Calu3 (cell line): ENCODE measurements at regions of chr10 and their contacts with region 1.

Region 1: DNA sequence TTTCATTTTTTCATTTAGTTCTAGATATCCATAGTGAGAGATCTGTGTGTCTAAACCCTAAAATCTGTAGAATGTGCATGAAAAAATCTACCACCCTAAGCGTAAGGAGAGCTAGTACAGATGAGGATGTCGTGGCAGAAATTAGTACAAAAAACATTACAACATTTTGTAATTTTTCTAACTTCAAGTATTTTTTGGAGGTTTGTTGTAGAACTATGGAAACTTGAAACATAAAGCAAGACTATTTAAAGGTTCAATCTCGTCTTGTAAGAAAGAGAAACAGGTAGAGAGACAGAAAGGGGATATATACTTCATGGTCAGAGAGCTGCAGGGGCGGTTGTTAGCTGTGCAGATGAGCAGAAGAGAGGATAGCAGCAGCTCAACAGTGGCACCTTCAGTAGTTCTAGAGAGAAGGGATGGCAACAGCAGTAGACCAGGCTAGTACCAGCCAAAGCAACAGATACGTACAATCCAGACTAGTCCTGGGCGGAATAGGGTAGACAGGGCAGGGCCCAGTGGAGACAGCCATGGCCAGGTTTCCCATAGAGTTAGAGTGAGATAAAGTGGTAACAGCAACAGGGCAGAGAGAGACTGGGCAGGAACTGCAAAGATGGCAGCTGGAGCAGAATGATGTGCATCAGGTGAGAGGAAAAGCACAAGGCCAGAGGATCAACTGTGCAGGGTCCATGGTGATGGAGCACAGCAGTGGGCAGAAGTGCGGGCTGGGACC is 145.2 kb downstream of the FRMD4A start:
- DNase-seq: no peak
- H3K4me3 Mint-ChIP-seq: no peak overlapping the region
- H3K27ac Mint-ChIP-seq: no peak overlapping the region
- H3K4me1 Mint-ChIP-seq: peaks cover 5% of the 10 kb centered on the region
- H3K27me3 Mint-ChIP-seq: peaks cover 68% of the 10 kb centered on the region
- CTCF ChIP-seq: no peak

Region 2: DNA sequence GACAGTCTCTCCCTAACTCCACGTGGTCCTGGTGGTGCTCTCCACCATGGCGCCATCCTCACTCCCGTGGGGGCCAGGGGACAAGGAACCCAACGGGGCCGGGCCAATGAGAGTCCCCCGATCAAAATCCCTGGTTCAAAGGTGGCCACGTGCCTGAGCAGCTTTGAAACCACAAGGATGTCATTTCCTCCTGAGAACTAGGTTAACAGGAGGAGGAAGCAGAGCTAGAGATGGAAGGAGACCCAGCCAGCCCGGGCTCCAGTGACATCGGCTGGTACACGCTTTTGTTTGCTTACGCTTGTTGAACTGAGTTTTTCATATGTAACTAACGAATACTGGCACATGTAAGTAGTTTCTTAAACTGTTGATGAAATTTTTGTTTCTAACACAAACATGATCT is 537.1 kb before region 1 on chr10:
- CTCF ChIA-PET with region 1: no interaction called
- intact Hi-C with region 1: no loop called
- DNase-seq: no peak
- H3K4me3 Mint-ChIP-seq: no peak overlapping the region
- H3K27ac Mint-ChIP-seq: no peak overlapping the region
- H3K4me1 Mint-ChIP-seq: no peaks in the 10 kb centered on the region
- H3K27me3 Mint-ChIP-seq: no peaks in the 10 kb centered on the region
- CTCF ChIP-seq: no peak

Region 3: GRCh38 chr10:13787015-13787421 is 398.5 kb before region 1 on chr10:
- CTCF ChIA-PET with region 1: no interaction called
- intact Hi-C with region 1: loop called (anchors 5 kb)
- DNase-seq: no peak
- H3K4me3 Mint-ChIP-seq: no peak overlapping the region
- H3K27ac Mint-ChIP-seq: no peak overlapping the region
- H3K4me1 Mint-ChIP-seq: no peaks in the 10 kb centered on the region
- H3K27me3 Mint-ChIP-seq: no peaks in the 10 kb centered on the region
- CTCF ChIP-seq: no peak

Region 4: DNA sequence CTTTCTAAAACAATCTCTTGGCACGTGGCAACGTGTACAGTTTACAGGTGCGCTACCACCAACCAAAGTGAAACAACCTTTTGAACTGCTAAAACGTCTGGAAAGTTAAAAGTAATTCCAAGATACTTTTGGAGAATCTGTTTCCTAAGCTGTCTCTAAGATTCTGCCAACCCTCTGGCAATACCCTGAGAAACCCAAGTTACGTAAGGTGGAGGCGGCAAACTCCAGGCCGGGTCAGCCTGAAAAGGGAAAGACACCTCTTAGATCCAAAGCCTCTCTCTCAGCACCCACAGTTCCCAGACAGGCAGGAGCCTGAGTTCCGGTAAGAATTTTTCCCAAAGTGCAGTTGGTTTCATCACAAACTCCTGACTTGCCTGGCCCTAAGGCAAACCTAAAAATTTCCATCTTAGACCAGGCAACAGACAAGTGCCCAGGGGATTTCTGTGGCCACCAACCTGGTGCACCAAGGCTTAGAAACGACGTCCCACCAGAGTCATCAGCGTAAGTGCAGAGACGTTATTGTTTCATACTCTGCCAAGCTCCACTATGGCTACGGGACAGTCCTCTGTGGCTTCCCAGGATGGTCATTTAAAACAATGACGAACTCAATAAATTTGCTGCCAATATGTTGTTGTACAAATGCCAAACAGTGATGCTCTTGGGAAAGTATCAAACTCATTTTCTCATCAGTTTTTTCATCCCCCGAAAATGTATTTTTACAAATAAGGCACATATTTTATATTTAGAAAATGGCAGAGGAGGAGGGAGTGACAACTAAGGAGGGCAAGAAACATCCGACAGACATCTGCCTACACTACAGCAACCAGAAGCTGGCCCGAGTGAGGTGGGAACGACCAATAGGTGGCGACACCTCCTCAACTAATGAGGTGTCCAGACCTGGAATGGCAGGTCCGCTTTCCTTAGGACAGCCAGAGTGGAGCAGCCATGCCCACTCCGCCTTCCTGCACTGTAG is 351.0 kb after region 1 on chr10:
- CTCF ChIA-PET with region 1: no interaction called
- intact Hi-C with region 1: no loop called
- DNase-seq: peak; percentile 75
- H3K4me3 Mint-ChIP-seq: no peak overlapping the region
- H3K27ac Mint-ChIP-seq: no peak overlapping the region
- H3K4me1 Mint-ChIP-seq: peaks cover 44% of the 10 kb centered on the region
- H3K27me3 Mint-ChIP-seq: no peaks in the 10 kb centered on the region
- CTCF ChIP-seq: peak; percentile 53